ENCODE measurements at regions of chr18 and their contacts with region 1.

Region 1: DNA sequence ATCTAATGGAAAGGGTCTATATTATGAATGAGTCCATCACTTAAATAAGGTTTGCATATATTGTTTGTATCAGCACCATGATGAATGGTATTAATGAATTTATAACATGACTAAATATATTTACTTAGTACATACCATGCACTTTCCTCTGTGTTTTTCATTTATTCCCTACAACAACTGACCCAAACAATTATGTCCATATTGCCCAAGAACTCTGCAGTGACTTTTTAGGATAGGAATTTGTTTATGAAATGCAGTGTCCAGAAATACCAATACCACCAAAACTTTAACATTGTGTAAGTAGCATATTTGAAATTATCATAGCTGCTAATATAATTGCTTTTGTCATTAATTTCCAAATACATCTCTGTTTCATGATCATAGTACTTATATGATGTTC is 119.7 kb downstream of the WDR7 start:
- DNase-seq: no peak
- ATAC-seq: no peak
- H3K4me3 ChIP-seq: no peak overlapping the region
- H3K27ac ChIP-seq: no peak overlapping the region
- H3K4me1 ChIP-seq: 0 out of 2 replicates have a peak, but pooled peaks cover 6% of the 10 kb centered on the region
- H3K27me3 ChIP-seq: no peaks in the 10 kb centered on the region
- CTCF ChIP-seq: no peak
- EP300 ChIP-seq: no peak
- POLR2A ChIP-seq: no peak
- RAD21 ChIP-seq: no peak

Region 2: GRCh38 chr18:55509631-55510324 is 1261.1 kb before region 1 on chr18:
- CTCF ChIA-PET with region 1: no interaction called
- POLR2A ChIA-PET with region 1: no interaction called
- in situ Hi-C with region 1: no loop called
- intact Hi-C with region 1: loop called (anchors 5 kb)
- DNase-seq: no peak
- ATAC-seq: no peak
- H3K4me3 ChIP-seq: no peak overlapping the region
- H3K27ac ChIP-seq: no peak overlapping the region
- H3K4me1 ChIP-seq: no peaks in the 10 kb centered on the region
- H3K27me3 ChIP-seq: no peaks in the 10 kb centered on the region
- CTCF ChIP-seq: no peak
- EP300 ChIP-seq: no peak
- POLR2A ChIP-seq: no peak
- RAD21 ChIP-seq: no peak